Motor neuron (in vitro differentiated cells): ENCODE measurements at regions of chr2 and their contacts with region 1.

Region 1: GRCh38 chr2:67733517-67733916 is 329.3 kb downstream of the C1D start:
- ATAC-seq: peak in 4 of 8 experiments; percentile 42 to 79 (median 62)
- H3K4me3 ChIP-seq: no peak overlapping the region
- H3K27ac ChIP-seq: no peak overlapping the region
- H3K4me1 ChIP-seq: peaks cover 9 to 13% of the 10 kb centered on the region in 2 donors

Region 2: DNA sequence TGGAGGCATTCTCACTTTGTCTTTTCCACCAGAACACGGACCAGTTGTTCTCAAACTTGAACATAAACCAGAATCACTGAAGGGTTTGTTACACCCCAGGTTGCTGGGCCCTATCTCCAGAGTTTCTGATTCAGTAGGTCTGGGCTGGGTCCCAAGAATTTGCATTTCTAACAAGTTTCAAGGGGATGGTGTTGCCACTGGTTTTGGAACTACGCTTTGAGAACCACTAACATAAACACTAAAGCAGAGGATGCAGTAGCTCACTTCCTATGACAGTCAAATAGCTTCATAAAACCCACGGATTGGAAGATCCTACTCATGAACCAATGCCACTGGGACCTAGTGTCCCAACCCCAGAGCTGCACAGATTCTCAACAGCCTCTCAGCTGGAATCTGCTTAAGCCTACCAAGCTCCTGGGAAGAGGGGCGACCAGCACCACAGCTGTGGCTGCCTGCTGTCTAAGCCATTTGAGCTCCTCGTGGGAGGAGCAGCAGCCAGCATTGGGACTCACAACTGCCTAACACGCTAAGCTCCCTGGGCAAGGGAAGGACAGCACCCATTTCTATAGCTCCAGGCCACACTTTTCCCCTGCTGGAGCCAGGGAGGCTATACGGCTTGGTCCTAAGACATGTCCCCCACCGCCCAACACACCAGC is 266.8 kb after region 1 on chr2:
- in situ Hi-C with region 1: loop called in 1 of 9 experiments (anchors 25 kb)
- ATAC-seq: no peak
- H3K4me3 ChIP-seq: no peak overlapping the region
- H3K27ac ChIP-seq: no peak overlapping the region
- H3K4me1 ChIP-seq: no peaks in the 10 kb centered on the region